ENCODE measurements at regions of chr7 and their contacts with region 1.

Region 1: GRCh38 chr7:130896898-130897514 is 163.0 kb upstream of the KLF14 start:
- DNase-seq: peak; percentile 76
- H3K4me3 Mint-ChIP-seq: no peak overlapping the region
- H3K27ac Mint-ChIP-seq: peak overlapping the region; percentile 74
- H3K4me1 Mint-ChIP-seq: peaks cover 86% of the 10 kb centered on the region
- H3K27me3 Mint-ChIP-seq: no peaks in the 10 kb centered on the region

Region 2: GRCh38 chr7:130884437-130885417 is 12.3 kb before region 1 on chr7:
- CTCF ChIA-PET with region 1: interaction called, 10 read pairs
- POLR2A ChIA-PET with region 1: interaction called, 5 read pairs
- DNase-seq: no peak
- H3K4me3 Mint-ChIP-seq: no peak overlapping the region
- H3K27ac Mint-ChIP-seq: peak overlapping the region; percentile 58
- H3K4me1 Mint-ChIP-seq: peaks cover 52% of the 10 kb centered on the region
- H3K27me3 Mint-ChIP-seq: no peaks in the 10 kb centered on the region

Region 3: DNA sequence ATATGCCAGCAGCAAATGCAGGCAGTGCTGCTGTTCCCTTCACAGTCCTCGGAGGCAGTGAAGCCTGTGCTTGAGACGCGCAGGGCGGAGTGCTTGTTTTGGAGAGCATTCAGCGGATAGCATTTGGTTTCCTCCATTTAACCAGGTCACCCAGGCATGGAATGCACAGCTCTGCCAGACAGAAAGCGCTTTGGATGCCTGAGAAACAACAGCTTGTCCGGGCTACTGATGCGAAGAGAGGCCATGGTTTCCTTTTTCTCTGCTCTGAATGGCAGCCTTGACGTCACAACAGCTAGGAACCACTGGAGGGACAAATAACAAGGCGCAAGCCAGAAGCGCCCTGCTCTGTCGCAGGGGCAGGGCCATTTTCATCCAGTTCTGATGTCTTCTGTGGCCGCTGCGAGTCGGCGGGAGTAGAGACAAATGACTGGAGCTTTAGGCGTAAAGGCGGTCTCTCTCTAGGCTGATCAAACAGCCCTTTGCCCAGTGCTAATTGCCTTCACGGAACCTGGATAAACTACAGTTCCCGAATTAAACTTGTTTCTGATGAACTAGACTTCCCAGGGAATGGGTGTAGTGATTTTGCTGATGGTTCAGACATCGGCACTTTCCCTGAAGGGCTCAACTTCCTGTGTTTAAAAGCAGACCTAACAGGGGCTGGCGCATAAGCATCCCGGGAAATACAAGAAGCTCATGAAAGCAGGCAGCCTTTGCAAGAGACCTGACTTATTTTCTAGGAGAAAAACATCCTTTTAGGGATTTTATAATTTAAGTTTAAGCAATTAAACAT is 24.6 kb after region 1 on chr7:
- CTCF ChIA-PET with region 1: interaction called, 13 read pairs
- POLR2A ChIA-PET with region 1: no interaction called
- DNase-seq: no peak
- H3K4me3 Mint-ChIP-seq: no peak overlapping the region
- H3K27ac Mint-ChIP-seq: peak overlapping the region; percentile 53
- H3K4me1 Mint-ChIP-seq: peaks cover 95% of the 10 kb centered on the region
- H3K27me3 Mint-ChIP-seq: no peaks in the 10 kb centered on the region

Region 4: DNA sequence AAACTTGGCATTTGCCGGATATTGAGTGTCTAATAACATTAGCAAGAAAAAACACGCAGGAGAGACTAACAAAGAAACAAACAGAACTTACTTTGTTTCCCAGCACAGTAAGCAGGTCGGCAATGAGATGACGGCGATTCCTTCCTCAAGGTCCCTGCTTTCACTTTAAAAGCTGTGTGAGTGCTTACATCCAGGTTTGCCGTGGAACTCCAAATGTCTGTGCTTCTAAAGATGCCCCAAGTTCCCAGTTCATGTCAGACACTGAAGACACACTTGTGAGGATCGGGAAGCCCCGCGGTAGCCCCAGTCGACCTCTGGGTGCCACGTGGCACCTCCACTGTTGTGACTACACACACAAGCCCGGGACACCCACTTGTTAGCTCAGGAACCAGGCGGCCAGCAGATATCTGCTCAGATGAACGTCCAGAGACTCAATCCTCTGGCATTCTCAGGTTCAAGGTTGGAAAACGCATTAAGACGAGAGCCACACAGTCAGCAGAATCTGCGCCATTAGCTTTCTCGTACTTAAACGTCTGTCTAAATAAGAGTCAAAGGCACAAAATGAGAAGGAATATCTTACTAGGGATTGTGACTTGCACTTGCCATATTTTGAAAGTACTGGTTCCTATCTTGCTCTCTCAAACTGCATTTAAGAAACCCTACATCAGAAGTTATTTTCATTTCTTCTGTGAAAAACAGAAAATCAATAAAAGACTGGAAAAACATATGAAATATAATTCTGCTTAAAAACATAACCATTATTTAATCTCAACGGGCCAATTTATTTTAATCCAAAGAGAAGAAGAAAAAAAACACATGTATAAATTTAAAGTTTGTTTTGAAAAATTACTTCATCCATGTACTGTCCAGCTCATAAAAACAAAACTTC is 44.6 kb after region 1 on chr7:
- CTCF ChIA-PET with region 1: interaction called, 37 read pairs
- POLR2A ChIA-PET with region 1: interaction called, 10 read pairs
- DNase-seq: no peak
- H3K4me3 Mint-ChIP-seq: peak overlapping the region; percentile 80
- H3K27ac Mint-ChIP-seq: peak overlapping the region; percentile 89
- H3K4me1 Mint-ChIP-seq: peaks cover 89% of the 10 kb centered on the region
- H3K27me3 Mint-ChIP-seq: no peaks in the 10 kb centered on the region

Region 5: GRCh38 chr7:130966246-130967009 is 69.4 kb after region 1 on chr7:
- CTCF ChIA-PET with region 1: interaction called, 66 read pairs
- POLR2A ChIA-PET with region 1: interaction called, 60 read pairs
- DNase-seq: no peak
- H3K4me3 Mint-ChIP-seq: no peak overlapping the region
- H3K27ac Mint-ChIP-seq: peak overlapping the region; percentile 49
- H3K4me1 Mint-ChIP-seq: peaks cover 73% of the 10 kb centered on the region
- H3K27me3 Mint-ChIP-seq: no peaks in the 10 kb centered on the region

Region 6: GRCh38 chr7:131002600-131002999 is 105.6 kb after region 1 on chr7:
- CTCF ChIA-PET with region 1: interaction called, 25 read pairs
- POLR2A ChIA-PET with region 1: interaction called, 5 read pairs
- DNase-seq: no peak
- H3K4me3 Mint-ChIP-seq: no peak overlapping the region
- H3K27ac Mint-ChIP-seq: no peak overlapping the region
- H3K4me1 Mint-ChIP-seq: peaks cover 62% of the 10 kb centered on the region
- H3K27me3 Mint-ChIP-seq: no peaks in the 10 kb centered on the region

Region 7: GRCh38 chr7:131040467-131040932 is 143.5 kb after region 1 on chr7:
- CTCF ChIA-PET with region 1: interaction called, 57 read pairs
- POLR2A ChIA-PET with region 1: interaction called, 7 read pairs
- DNase-seq: peak; percentile 52
- H3K4me3 Mint-ChIP-seq: no peak overlapping the region
- H3K27ac Mint-ChIP-seq: no peak overlapping the region
- H3K4me1 Mint-ChIP-seq: peaks cover 47% of the 10 kb centered on the region
- H3K27me3 Mint-ChIP-seq: no peaks in the 10 kb centered on the region

Measured in activated CD4-positive, alpha-beta memory T cell treated with anti-CD3 and anti-CD28 coated beads, Interleukin-2, amount 10 ng/mL, durations not matched to agents 7 days and 5 days (primary cell).